Posterior cingulate gyrus (tissue), 11 donors: ENCODE measurements at regions of chr11 and their contacts with region 1.

Region 1: DNA sequence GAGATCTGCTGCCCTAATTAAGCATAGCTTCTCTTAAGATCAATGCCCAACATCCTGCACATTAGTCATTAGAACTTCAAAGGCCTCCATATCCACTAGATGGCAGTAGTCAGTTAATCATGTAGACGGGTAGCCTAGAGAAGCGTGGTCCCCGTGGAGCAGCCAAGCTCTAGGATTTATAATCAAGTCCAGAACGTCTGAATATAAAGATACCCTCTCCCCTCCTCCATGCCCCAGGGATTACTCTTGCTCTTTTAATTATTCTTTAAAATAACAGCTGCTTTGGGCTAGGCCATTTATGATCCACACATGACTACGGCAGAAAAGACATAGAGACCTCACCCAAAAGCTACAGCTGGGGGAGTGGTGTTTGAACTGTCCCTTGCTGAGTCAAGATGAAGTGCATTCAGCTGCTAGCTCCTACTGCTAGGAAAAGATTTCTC is 327.6 kb upstream of the PLET1 start:
- DNase-seq: peak; percentile 42 to 94 (median 58)

Region 2: GRCh38 chr11:112665291-112665690 is 77.0 kb after region 1 on chr11:
- intact Hi-C with region 1: no loop called
- DNase-seq: peak in 3 of 10 donors; percentile 20 to 64 (median 20)

Region 3: GRCh38 chr11:113289431-113290187 is 701.3 kb after region 1 on chr11:
- intact Hi-C with region 1: loop called (anchors 2 kb)
- DNase-seq: peak; percentile 49 to 96 (median 75)